ENCODE measurements at regions of chr9 and their contacts with region 1.

Region 1: GRCh38 chr9:105157130-105157583 is 87.3 kb upstream of the SLC44A1 start:
- DNase-seq: peak in 3 of 4 donors; percentile 60 to 76 (median 75)
- ATAC-seq: peak; percentile 94
- H3K4me3 ChIP-seq: no peak overlapping the region
- H3K27ac ChIP-seq: peak overlapping the region in 1 of 2 donors; percentile 23
- H3K4me1 ChIP-seq: peaks cover 0 to 28% of the 10 kb centered on the region in 2 donors
- H3K27me3 ChIP-seq: no peaks in the 10 kb centered on the region
- CTCF ChIP-seq: peak in 1 of 2 donors; percentile 51

Region 2: DNA sequence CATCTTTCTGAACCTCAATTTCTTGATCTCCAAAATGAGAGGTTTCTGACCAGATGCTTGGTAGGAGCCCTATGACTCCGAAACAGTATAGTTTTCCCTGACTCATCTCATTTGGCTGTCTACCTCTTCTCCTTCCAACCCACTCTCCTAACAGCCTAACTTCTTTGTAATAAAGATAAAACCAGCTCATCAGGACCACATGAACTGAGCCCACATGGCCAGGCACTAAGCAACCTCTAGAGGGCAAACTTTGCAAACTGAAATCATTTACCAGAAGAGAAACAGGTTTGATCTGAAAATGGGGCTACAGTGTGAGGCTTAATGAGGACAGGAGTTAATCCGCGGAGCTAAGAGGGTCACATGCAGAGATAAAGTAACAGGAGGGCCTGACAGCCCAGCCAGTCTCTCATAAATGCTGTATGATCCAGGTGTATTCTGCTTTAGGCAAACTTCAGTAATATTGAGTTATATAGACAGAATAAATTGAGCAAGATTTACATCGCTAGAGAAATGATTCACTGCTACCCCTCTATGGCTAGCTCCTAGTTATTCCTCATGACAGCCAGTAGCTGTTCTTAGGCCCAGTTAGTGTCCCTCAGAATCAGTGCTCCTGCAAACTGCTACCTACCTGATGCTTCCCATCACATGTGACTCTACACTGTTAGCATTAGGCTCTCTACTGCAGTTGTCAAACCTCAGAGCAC is 293.8 kb before region 1 on chr9:
- intact Hi-C with region 1: loop called in 1 of 2 experiments (anchors 5 kb)
- DNase-seq: peak in 2 of 4 donors; percentile 50 to 72
- ATAC-seq: peak; percentile 71
- H3K4me3 ChIP-seq: no peak overlapping the region
- H3K27ac ChIP-seq: no peak overlapping the region
- H3K4me1 ChIP-seq: peaks cover 10 to 76% of the 10 kb centered on the region in 2 donors
- H3K27me3 ChIP-seq: no peaks in the 10 kb centered on the region
- CTCF ChIP-seq: peak; percentile 55 to 72

Region 3: GRCh38 chr9:105087910-105088888 is 69.0 kb before region 1 on chr9:
- intact Hi-C with region 1: no loop called
- DNase-seq: no peak
- ATAC-seq: peak; percentile 34
- H3K4me3 ChIP-seq: no peak overlapping the region
- H3K27ac ChIP-seq: no peak overlapping the region
- H3K4me1 ChIP-seq: no peaks in the 10 kb centered on the region
- H3K27me3 ChIP-seq: no peaks in the 10 kb centered on the region
- CTCF ChIP-seq: no peak

Measured in left lung (tissue), 14 donors.